ENCODE measurements at regions of chr5 and their contacts with region 1.

Region 1: DNA sequence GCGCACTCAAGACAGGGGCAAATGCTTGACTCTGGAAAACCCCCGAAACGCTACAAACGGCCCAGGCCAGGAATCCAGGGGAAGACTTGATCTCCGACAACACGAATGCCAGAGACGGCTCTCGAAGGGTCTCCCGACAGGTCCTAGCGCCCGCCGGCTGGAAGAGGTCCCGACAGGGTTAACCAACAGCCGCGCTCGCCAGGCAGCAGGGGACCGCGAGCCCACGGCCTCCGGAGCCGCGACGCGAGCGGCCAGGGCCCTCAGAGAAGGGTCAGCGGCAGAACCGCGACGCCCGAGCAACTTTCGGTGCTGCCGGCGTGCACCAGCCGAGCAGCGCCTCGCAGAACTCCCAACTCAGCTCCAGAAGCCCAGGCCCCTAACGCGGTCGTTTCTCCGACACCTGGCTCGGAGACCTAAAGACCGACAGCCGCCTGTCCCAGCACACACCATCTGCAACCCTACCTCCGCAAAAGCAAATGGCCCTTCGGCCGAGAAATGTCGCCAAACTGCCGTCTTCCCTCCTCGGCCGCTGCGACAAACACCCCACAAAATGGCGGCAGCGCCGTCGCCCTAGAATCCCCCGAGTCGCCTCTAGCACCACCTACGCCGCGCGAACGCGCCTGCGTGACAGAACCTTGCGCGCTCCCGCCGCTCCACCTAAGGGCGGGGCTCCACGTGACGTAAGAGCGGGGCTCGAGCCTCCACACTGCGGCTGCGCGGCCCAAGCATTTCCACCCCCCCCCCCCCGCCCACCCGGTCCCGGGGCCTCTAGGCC is at the start of gene CLK4:
- DNase-seq: peak; percentile 96
- H3K4me3 Mint-ChIP-seq: peak within 1 kb of the TSS; percentile 98
- H3K27ac Mint-ChIP-seq: peak within 1 kb of the TSS; percentile 99
- H3K4me1 Mint-ChIP-seq: peaks cover 38% of the 10 kb centered on the region
- H3K27me3 Mint-ChIP-seq: peaks cover 13% of the 10 kb centered on the region
- total RNA-seq, gene CLK4: 27.5 and 28.6 TPM in 2 replicates

Region 2: GRCh38 chr5:178204182-178204894 is 422.3 kb before region 1 on chr5 and contains the start of gene HNRNPAB:
- intact Hi-C with region 1: loop called (anchors 1 kb)
- DNase-seq: peak; percentile 94
- H3K4me3 Mint-ChIP-seq: peak within 1 kb of the TSS; percentile 99
- H3K27ac Mint-ChIP-seq: peak within 1 kb of the TSS; percentile 100
- H3K4me1 Mint-ChIP-seq: peaks cover 35% of the 10 kb centered on the region
- H3K27me3 Mint-ChIP-seq: peaks cover 2% of the 10 kb centered on the region
- total RNA-seq, gene HNRNPAB: 459 and 472 TPM in 2 replicates

Region 3: GRCh38 chr5:178732281-178732680 is 105.6 kb after region 1 on chr5:
- intact Hi-C with region 1: loop called (anchors 1 kb)
- DNase-seq: no peak
- H3K4me3 Mint-ChIP-seq: no peak overlapping the region
- H3K27ac Mint-ChIP-seq: no peak overlapping the region
- H3K4me1 Mint-ChIP-seq: peaks cover 6% of the 10 kb centered on the region
- H3K27me3 Mint-ChIP-seq: peaks cover 1% of the 10 kb centered on the region

Region 4: DNA sequence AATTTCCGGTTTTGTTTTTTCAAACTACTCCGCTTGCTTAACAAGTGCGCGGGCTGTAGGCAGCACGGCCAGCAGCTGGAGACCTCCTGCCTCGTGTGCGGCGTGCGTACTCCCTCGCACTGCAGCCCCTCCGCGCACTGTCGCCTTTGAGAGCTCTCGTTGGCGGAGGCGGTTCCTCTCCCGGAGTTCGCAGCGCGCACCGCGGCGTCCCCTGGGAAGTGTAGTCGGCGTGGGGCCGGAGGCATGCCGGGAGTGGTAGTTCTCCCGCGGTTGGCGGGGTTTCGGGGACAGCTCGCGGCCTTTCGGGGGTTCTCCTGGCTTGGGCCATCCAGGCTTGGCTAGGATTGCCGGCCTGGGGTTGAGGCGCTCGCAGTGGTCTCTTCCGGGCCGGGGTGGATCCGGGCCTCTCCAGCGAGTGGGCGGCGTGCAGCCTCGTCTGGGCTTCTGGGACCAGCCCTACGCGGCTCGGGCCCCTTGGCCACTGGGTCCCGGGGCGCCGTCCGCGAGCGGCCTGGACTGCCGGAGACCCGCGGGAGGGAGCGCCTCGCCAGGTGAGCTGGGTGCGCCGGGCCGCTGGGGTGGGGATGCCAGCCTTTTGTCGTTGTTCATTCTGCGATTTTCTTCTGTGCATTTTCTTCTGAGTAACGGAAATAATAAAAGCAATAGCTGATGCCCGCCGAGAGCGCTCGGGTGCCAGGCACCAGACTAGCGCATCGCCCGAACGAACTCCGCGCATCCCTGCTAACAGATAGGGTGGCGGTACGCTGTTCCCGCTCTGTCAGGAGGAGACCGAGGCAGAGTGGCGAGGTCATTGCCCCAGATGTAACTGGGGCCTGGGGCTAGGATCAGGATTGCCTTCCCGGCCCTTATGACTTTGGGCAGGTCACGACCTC is 433.7 kb after region 1 on chr5 and contains the start of gene ZNF354C:
- intact Hi-C with region 1: loop called (anchors 2 kb)
- DNase-seq: peak; percentile 76
- H3K4me3 Mint-ChIP-seq: peak within 1 kb of the TSS; percentile 88
- H3K27ac Mint-ChIP-seq: peak within 1 kb of the TSS; percentile 61
- H3K4me1 Mint-ChIP-seq: no peaks in the 10 kb centered on the region
- H3K27me3 Mint-ChIP-seq: no peaks in the 10 kb centered on the region
- total RNA-seq, gene ZNF354C: 3.5 and 4.1 TPM in 2 replicates

Region 5: DNA sequence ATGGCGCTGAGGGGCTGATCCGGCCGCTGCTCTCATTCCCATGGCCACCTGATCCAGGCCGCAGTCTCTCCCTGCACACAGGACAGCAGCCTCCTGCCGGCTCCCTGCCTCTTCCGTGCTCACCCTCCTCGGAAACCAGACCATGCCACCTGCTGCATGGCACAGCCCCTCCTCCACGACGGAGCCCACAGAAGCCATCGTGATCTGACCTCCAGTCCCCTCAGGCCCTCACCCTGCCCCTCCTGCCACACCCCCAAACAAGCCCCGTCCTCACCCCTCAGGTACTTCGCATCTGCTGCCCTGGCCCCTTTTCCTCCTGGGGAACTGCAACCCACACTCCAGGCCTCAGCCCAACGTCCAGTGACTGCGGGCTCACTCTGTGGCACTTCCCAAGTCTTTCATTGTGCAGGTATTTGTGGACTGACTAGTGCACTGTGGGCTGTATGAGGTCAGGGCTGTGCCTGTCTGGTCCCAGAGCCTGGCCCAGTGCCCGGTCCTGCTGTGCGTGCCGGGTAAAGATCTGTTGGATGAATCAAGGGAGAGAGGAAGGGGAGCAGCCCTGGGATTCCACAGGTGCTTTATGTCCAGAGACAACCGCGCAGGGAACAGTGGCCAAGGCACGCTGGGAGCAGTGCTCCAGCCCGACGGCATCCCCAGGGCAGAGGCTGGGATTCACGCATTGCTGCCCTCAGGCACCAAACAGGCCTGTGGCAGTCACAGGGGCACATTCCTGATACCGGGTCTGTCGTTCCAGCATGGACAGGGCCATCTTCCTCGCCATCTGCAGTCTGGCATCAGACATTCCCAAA is 632.5 kb after region 1 on chr5:
- intact Hi-C with region 1: no loop called
- DNase-seq: no peak
- H3K4me3 Mint-ChIP-seq: no peak overlapping the region
- H3K27ac Mint-ChIP-seq: no peak overlapping the region
- H3K4me1 Mint-ChIP-seq: no peaks in the 10 kb centered on the region
- H3K27me3 Mint-ChIP-seq: no peaks in the 10 kb centered on the region

Region 6: GRCh38 chr5:179623003-179623880 is 996.6 kb after region 1 on chr5 and contains the start of gene HNRNPH1:
- intact Hi-C with region 1: loop called (anchors 2 kb)
- DNase-seq: peak; percentile 97
- H3K4me3 Mint-ChIP-seq: peak within 1 kb of the TSS; percentile 94
- H3K27ac Mint-ChIP-seq: peak within 1 kb of the TSS; percentile 98
- H3K4me1 Mint-ChIP-seq: peaks cover 42% of the 10 kb centered on the region
- H3K27me3 Mint-ChIP-seq: peaks cover 2% of the 10 kb centered on the region
- total RNA-seq, gene HNRNPH1: 987 and 1,028 TPM in 2 replicates

Region 7: DNA sequence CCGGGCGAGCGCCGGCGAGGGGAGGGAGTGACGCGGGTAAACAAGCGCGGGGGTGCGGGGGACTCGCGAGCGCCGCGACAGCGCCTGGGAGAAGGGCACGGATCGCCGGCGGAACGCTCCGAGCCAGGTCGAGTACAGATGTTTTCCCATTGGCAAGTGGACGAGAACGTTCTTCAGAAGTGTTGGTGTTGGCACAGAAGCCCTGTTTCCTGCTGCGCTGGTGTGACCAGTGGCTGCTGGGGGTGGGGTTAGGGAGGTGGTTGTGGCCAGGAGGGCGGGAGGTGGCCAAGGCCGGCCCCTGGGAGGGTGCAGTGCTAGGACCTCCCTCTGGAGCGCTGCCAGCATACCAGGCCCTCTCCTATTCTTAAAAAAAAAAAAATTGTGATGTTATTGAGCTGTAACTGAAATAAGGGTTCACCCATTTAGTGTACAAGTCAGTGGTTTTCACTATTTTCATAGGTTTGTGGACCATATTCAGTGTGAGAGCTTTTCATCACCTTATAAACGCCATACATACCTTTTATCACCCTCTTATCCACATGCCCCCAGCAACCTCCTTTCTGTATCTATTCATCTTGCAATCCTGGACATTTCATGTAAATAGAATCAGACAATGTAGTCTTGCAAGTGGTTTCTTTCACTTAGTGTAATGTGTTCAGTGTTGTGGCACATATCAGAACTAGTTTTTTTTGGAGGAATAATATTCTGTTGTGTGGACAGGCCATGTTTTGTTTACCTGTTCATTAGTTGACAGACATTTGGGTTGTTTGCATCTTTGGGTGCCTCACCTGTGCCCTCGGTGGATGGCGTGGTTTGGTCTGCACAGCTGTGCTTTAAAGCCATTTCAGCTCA is 1195.1 kb after region 1 on chr5:
- intact Hi-C with region 1: loop called (anchors 10 kb)
- DNase-seq: peak; percentile 83
- H3K4me3 Mint-ChIP-seq: peak overlapping the region; percentile 95
- H3K27ac Mint-ChIP-seq: peak overlapping the region; percentile 97
- H3K4me1 Mint-ChIP-seq: peaks cover 48% of the 10 kb centered on the region
- H3K27me3 Mint-ChIP-seq: no peaks in the 10 kb centered on the region